GM10248 (cell line): ENCODE measurements at regions of chr19 and their contacts with region 1.

Region 1: GRCh38 chr19:46040952-46041500 is at the start of gene IGFL4:
- DNase-seq: no peak
- CTCF ChIP-seq: no peak

Region 2: DNA sequence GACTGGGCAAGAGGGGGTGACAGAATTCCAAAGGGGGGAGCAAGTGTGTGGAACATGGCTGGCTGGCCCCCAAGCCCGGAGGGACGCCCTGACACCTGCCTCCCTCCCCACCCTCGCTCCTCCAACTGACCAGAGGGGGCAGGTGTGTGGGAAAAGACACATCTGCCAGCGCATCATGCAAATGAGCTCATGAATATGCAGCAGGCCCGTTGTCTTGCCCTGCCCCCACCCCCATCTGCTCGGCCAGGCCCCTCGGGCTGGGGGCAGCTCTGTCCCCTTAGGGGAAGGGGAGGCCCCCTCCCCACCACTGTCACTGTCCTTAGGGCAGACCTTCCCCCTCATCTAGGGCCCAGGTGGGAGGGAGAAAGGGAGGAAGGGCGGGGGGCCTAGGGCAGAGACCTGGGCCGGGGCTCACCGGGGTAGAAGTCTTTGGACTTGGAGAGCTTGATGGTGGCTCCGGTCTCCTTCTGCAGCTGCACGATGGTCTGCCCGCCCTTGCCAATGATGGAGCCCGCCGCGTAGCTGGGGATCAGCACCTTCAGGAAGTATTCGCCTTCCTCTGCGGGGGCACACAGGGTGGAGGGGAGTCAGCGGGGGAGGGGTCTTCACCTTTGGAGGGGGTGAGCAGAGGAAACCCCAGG is 80.3 kb before region 1 on chr19:
- CTCF ChIA-PET with region 1: no interaction called
- POLR2A ChIA-PET with region 1: no interaction called
- DNase-seq: no peak
- CTCF ChIP-seq: no peak

Region 3: GRCh38 chr19:46022431-46023310 is 18.4 kb before region 1 on chr19 and contains the start of gene PGLYRP1:
- CTCF ChIA-PET with region 1: interaction called, 19 read pairs
- POLR2A ChIA-PET with region 1: no interaction called
- DNase-seq: no peak
- CTCF ChIP-seq: no peak

Region 4: GRCh38 chr19:46030812-46031550 is 10.0 kb before region 1 on chr19:
- CTCF ChIA-PET with region 1: interaction called, 19 read pairs
- POLR2A ChIA-PET with region 1: no interaction called
- DNase-seq: no peak
- CTCF ChIP-seq: no peak

Region 5: GRCh38 chr19:46081928-46082727 is 41.1 kb after region 1 on chr19:
- CTCF ChIA-PET with region 1: no interaction called
- POLR2A ChIA-PET with region 1: no interaction called
- DNase-seq: peak; percentile 51
- CTCF ChIP-seq: peak; percentile 45